Activated CD4-positive, alpha-beta memory T cell treated with anti-CD3 and anti-CD28 coated beads for 36 hours (primary cell): ENCODE measurements at regions of chr9 and their contacts with region 1.

Region 1: GRCh38 chr9:97921959-97922724 is at the start of gene TRMO:
- DNase-seq: peak; percentile 98
- H3K4me3 Mint-ChIP-seq: peak within 1 kb of the TSS; percentile 85
- H3K27ac Mint-ChIP-seq: peak within 1 kb of the TSS; percentile 96
- H3K4me1 Mint-ChIP-seq: peaks cover 39% of the 10 kb centered on the region
- H3K27me3 Mint-ChIP-seq: peaks cover 2% of the 10 kb centered on the region
- total RNA-seq, gene TRMO: 13.3 to 13.4 TPM

Region 2: GRCh38 chr9:97632985-97633858 is 288.9 kb before region 1 on chr9 and contains the starts of genes NCBP1 and TSTD2:
- CTCF ChIA-PET with region 1: interaction called, 5 read pairs
- POLR2A ChIA-PET with region 1: interaction called, 6 read pairs
- intact Hi-C with region 1: loop called (anchors 1 kb)
- DNase-seq: peak; percentile 98
- H3K4me3 Mint-ChIP-seq: peak within 1 kb of the TSS; percentile 86
- H3K27ac Mint-ChIP-seq: peak within 1 kb of the TSS; percentile 97
- H3K4me1 Mint-ChIP-seq: peaks cover 50% of the 10 kb centered on the region
- H3K27me3 Mint-ChIP-seq: no peaks in the 10 kb centered on the region
- total RNA-seq, gene NCBP1: 43.4 to 47.2 TPM
- total RNA-seq, gene TSTD2: 10.3 to 13.4 TPM

Region 3: DNA sequence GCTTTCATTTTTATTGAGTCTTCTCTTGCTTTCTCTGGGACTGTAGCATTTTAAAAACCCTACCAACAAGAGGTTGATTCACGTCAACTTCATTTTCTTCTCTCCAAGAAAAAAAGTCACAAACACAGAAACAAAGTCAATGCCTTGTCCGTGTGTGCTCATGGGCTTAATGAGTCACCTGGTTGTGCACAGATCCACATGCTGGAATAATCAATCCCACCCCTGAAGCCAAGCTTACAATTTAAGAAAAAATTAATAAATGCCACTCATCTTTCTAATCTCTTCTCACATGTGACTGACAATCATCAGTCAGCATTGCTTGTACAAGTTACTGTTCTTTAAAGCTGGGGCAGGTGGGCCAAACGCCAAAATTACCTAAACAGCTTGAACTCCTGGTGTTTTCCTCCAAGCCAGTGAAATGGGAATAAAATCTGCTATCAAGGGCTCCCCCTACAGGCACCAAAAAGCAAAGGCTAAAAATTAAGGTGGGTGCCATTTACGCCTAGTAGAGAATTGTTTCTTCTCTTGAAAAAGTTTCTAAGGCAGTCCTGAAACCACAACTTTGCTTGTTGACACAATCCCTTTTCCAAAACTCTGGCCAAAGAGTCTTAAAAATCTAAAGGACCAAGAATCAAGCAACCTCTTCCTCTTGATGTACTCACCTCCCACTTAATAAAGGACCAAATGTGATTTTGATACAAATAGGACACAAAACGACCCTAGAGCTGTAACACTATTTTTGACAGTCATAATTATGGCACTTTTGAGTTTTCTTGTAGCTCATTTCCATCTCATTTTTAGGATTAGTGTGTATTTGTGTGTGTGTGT is 21.2 kb before region 1 on chr9:
- CTCF ChIA-PET with region 1: interaction called, 62 read pairs
- POLR2A ChIA-PET with region 1: interaction called, 26 read pairs
- intact Hi-C with region 1: loop called (anchors 1 kb)
- DNase-seq: no peak
- H3K4me3 Mint-ChIP-seq: no peak overlapping the region
- H3K27ac Mint-ChIP-seq: no peak overlapping the region
- H3K4me1 Mint-ChIP-seq: peaks cover 55% of the 10 kb centered on the region
- H3K27me3 Mint-ChIP-seq: no peaks in the 10 kb centered on the region

Region 4: GRCh38 chr9:97938081-97938644 is 16.0 kb after region 1 on chr9 and contains the start of gene HEMGN:
- CTCF ChIA-PET with region 1: interaction called, 15 read pairs
- POLR2A ChIA-PET with region 1: interaction called, 3 read pairs
- intact Hi-C with region 1: no loop called
- DNase-seq: peak; percentile 58
- H3K4me3 Mint-ChIP-seq: peak within 1 kb of the TSS; percentile 6
- H3K27ac Mint-ChIP-seq: peak within 1 kb of the TSS; percentile 77
- H3K4me1 Mint-ChIP-seq: peaks cover 20% of the 10 kb centered on the region
- H3K27me3 Mint-ChIP-seq: no peaks in the 10 kb centered on the region
- total RNA-seq, gene HEMGN: 0.69 to 0.99 TPM

Region 5: DNA sequence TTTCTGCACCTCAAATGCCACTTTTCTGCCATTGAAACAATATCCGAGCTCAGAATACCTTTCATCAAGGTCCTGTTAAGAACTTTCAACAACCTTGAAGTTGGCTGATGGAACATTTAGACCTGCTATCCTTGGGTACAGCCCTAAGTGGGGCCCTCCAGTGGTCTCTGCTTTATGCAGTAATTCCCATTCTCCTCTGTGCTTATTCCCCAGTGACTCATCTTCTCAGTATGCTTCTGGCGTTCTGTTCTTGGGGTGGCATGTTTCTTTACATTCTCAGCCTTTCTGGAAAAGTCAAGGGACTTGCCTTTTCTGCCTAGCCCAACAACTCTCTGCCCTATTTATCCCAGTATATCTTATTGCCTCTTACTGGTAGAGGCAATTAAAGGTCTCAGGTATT is 68.1 kb after region 1 on chr9:
- CTCF ChIA-PET with region 1: interaction called, 32 read pairs
- POLR2A ChIA-PET with region 1: interaction called, 77 read pairs
- intact Hi-C with region 1: no loop called
- DNase-seq: no peak
- H3K4me3 Mint-ChIP-seq: no peak overlapping the region
- H3K27ac Mint-ChIP-seq: peak overlapping the region; percentile 24
- H3K4me1 Mint-ChIP-seq: peaks cover 80% of the 10 kb centered on the region
- H3K27me3 Mint-ChIP-seq: no peaks in the 10 kb centered on the region

Region 6: DNA sequence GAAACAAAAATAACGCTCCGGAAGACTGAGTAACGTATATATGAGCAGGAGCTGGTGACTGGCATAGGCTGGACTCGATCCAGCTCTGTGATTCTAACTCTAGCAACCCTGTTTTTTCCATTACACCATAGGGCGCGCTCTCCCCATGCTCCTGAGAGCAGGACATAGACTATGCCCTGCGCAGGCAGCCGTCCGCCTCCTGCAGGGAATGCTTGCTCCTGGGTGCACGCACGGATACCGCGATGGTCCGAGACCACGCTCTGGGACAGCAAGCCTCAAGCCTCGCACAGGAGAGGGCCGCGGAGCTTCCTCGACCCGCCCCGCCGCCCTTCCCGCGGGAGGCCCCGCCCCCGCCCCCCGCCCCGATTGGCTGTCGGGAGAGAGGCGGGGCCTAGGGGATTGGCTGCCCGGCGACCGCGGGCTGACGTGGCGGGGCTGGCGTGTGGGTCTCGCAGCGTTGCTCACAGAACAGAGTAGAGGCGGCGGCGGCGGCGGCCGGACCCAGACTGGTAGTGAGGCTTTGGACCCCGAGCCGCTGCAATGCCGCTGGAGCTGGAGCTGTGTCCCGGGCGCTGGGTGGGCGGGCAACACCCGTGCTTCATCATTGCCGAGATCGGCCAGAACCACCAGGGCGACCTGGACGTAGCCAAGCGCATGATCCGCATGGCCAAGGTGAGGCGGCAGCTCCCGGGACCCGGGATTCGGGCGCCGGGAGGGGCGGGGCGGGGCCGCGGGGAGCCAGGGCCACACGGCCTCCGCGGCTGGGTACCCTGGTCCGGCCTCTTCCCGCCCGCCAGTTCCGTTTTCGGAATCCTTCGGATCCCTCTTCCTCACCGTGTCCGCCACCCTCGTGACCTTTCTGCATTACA is 134.4 kb after region 1 on chr9 and contains the start of gene NANS:
- CTCF ChIA-PET with region 1: interaction called, 6 read pairs
- POLR2A ChIA-PET with region 1: interaction called, 17 read pairs
- intact Hi-C with region 1: loop called (anchors 2 kb)
- DNase-seq: peak; percentile 95
- H3K4me3 Mint-ChIP-seq: peak within 1 kb of the TSS; percentile 92
- H3K27ac Mint-ChIP-seq: peak within 1 kb of the TSS; percentile 91
- H3K4me1 Mint-ChIP-seq: peaks cover 19% of the 10 kb centered on the region
- H3K27me3 Mint-ChIP-seq: no peaks in the 10 kb centered on the region
- total RNA-seq, gene NANS: 48.4 to 51.9 TPM

Region 7: GRCh38 chr9:98255578-98256296 is 333.6 kb after region 1 on chr9 and contains the start of gene TBC1D2:
- CTCF ChIA-PET with region 1: interaction called, 9 read pairs
- POLR2A ChIA-PET with region 1: interaction called, 5 read pairs
- intact Hi-C with region 1: loop called (anchors 1 kb)
- DNase-seq: peak; percentile 98
- H3K4me3 Mint-ChIP-seq: peak within 1 kb of the TSS; percentile 85
- H3K27ac Mint-ChIP-seq: peak within 1 kb of the TSS; percentile 95
- H3K4me1 Mint-ChIP-seq: peaks cover 32% of the 10 kb centered on the region
- H3K27me3 Mint-ChIP-seq: no peaks in the 10 kb centered on the region
- total RNA-seq, gene TBC1D2: 5.2 to 5.3 TPM